Vagina (tissue), 2 donors: ENCODE measurements at regions of chr10 and their contacts with region 1.

Region 1: GRCh38 chr10:101095542-101096213 is 33.9 kb downstream of the KAZALD1 start:
- DNase-seq: no peak
- H3K4me3 ChIP-seq: no peak overlapping the region
- H3K27ac ChIP-seq: no peak overlapping the region
- H3K4me1 ChIP-seq: no peaks in the 10 kb centered on the region
- H3K27me3 ChIP-seq: no peaks in the 10 kb centered on the region
- CTCF ChIP-seq: peak; percentile 36 to 52 (median 41)
- POLR2A ChIP-seq: no peak

Region 2: GRCh38 chr10:101141616-101142532 is 46.2 kb after region 1 on chr10:
- intact Hi-C with region 1: loop called (anchors 5 kb)
- DNase-seq: no peak
- H3K4me3 ChIP-seq: no peak overlapping the region
- H3K27ac ChIP-seq: no peak overlapping the region
- H3K4me1 ChIP-seq: peaks cover 24% of the 10 kb centered on the region
- H3K27me3 ChIP-seq: peaks cover 27% of the 10 kb centered on the region
- CTCF ChIP-seq: peak; percentile 71 to 86 (median 79)
- POLR2A ChIP-seq: no peak